Endothelial cell of umbilical vein (primary cell): ENCODE measurements at regions of chr5 and their contacts with region 1.

Region 1: GRCh38 chr5:111680737-111681413 is 76.1 kb downstream of the NREP start:
- DNase-seq: peak; percentile 99
- H3K4me3 ChIP-seq: peak overlapping the region in 1 of 3 experiments; percentile 13
- H3K27ac ChIP-seq: peak overlapping the region; percentile 94
- H3K4me1 ChIP-seq: peaks cover 27% of the 10 kb centered on the region
- H3K27me3 ChIP-seq: no peaks in the 10 kb centered on the region
- CTCF ChIP-seq: no peak
- POLR2A ChIP-seq: no peak

Region 2: GRCh38 chr5:111655169-111655924 is 25.5 kb before region 1 on chr5:
- CTCF ChIA-PET with region 1: no interaction called
- POLR2A ChIA-PET with region 1: no interaction called
- dilution Hi-C with region 1: no loop called
- intact Hi-C with region 1: no loop called
- DNase-seq: peak; percentile 41
- H3K4me3 ChIP-seq: no peak overlapping the region
- H3K27ac ChIP-seq: no peak overlapping the region
- H3K4me1 ChIP-seq: no peaks in the 10 kb centered on the region
- H3K27me3 ChIP-seq: no peaks in the 10 kb centered on the region
- CTCF ChIP-seq: no peak
- POLR2A ChIP-seq: no peak

Region 3: DNA sequence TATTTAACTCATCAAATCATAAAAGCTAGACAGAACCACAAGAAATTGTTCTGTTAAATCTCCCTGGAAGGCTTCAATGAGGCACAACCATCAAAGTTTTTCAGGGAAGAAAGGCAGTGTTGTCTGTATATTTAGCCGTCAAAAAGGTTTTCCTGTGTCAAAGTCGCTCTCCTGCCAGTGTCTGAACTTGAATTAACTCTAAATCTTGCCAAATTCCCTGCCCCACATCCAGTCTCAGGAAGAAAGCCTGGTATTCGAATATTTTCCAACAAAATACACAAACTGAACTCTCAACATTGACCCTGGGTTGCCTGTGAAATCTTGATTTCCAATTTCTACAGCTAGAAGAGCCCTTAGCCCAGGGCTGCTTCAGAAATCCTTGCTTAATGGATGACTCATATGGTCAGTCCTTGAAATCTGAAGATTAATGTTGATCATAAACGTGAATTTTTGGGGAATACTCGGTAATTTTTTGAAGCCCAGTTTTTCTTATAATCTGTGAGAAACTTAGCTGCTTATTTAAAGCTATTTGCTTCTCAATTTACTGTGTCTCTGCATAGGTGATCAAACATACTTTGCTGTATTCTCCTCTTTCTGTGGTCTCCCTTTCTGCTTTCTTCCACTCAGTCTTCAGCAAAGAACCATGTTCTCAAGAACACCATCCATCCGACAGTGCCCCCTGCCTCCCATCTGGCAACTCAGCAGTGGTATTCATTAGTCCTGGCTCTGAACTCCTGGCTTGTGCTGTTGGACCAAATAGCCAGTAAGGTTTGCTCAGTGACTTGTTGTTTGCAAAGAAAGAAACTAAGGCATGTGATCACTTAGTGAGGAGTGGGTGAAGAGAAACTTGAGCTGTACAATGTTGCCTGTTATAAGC is 17.2 kb after region 1 on chr5:
- CTCF ChIA-PET with region 1: interaction called, 14 read pairs
- POLR2A ChIA-PET with region 1: interaction called, 3 read pairs
- dilution Hi-C with region 1: no loop called
- intact Hi-C with region 1: loop called (anchors 1 kb)
- DNase-seq: peak; percentile 88
- H3K4me3 ChIP-seq: no peak overlapping the region
- H3K27ac ChIP-seq: peak overlapping the region; percentile 49
- H3K4me1 ChIP-seq: peaks cover 12% of the 10 kb centered on the region
- H3K27me3 ChIP-seq: no peaks in the 10 kb centered on the region
- CTCF ChIP-seq: peak; percentile 57 to 59
- POLR2A ChIP-seq: no peak

Region 4: DNA sequence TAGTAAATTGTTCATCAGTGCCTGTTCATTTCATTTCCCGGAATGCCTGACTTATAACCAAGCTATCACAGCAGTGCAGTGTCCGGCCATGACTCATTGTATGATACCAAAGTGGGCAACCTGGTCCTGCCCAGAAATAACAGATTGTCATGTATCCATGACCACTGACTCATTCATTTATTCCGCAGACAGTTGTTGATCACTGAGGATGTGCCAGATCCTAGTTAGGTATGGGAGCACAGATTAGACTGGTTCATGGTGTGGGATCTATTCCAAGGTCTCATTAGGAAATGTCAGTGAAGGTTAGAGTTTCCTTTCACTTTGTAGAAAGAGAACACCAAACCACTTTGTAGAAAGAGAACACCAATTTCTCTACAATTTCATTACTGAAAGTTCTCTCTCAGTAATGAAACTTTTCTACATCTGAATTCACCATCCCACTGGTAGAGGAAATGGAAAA is 67.5 kb after region 1 on chr5:
- CTCF ChIA-PET with region 1: no interaction called
- POLR2A ChIA-PET with region 1: no interaction called
- dilution Hi-C with region 1: no loop called
- intact Hi-C with region 1: loop called (anchors 1 kb)
- DNase-seq: peak; percentile 95
- H3K4me3 ChIP-seq: peak overlapping the region in 1 of 3 experiments; percentile 29
- H3K27ac ChIP-seq: peak overlapping the region; percentile 71
- H3K4me1 ChIP-seq: peaks cover 26% of the 10 kb centered on the region
- H3K27me3 ChIP-seq: no peaks in the 10 kb centered on the region
- CTCF ChIP-seq: no peak
- POLR2A ChIP-seq: no peak